IMR-90 (cell line): ENCODE measurements at regions of chr13 and their contacts with region 1.

Region 1: GRCh38 chr13:59677966-59678814 is 485.5 kb downstream of the DIAPH3 start:
- DNase-seq: peak; percentile 72
- ATAC-seq: peak; percentile 88
- H3K4me3 ChIP-seq: no peak overlapping the region
- H3K27ac ChIP-seq: no peak overlapping the region
- H3K4me1 ChIP-seq: peaks cover 3% of the 10 kb centered on the region
- H3K27me3 ChIP-seq: no peaks in the 10 kb centered on the region
- CTCF ChIP-seq: peak; percentile 88
- POLR2A ChIP-seq: no peak
- RAD21 ChIP-seq: peak; percentile 89

Region 2: DNA sequence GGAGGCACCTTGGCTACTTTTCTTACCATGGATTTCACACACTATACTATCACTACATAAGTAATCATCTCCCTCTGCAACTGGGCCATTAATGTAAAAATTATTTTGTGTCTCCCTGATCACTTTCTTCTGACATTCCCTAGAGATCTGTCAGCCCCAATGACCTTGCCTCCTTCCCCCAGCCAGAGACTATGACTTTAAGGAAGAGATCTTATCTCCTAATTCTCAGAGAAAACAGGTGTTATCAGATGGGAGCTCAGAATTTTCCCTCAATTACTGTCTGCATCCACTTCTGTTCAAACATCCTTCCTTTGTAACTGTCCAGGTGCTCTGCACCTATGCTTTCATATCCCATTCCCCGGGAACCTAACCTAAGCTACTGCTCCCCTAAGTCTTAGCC is 88.0 kb after region 1 on chr13:
- CTCF ChIA-PET with region 1: interaction called, 29 read pairs
- POLR2A ChIA-PET with region 1: no interaction called
- dilution Hi-C with region 1: no loop called
- in situ Hi-C with region 1: loop called (anchors 5 kb)
- intact Hi-C with region 1: loop called (anchors 1 kb)
- DNase-seq: no peak
- ATAC-seq: no peak
- H3K4me3 ChIP-seq: no peak overlapping the region
- H3K27ac ChIP-seq: no peak overlapping the region
- H3K4me1 ChIP-seq: no peaks in the 10 kb centered on the region
- H3K27me3 ChIP-seq: no peaks in the 10 kb centered on the region
- CTCF ChIP-seq: no peak
- POLR2A ChIP-seq: no peak
- RAD21 ChIP-seq: no peak

Region 3: GRCh38 chr13:59906413-59907049 is 228.3 kb after region 1 on chr13:
- CTCF ChIA-PET with region 1: interaction called, 3 read pairs
- POLR2A ChIA-PET with region 1: no interaction called
- dilution Hi-C with region 1: no loop called
- in situ Hi-C with region 1: no loop called
- intact Hi-C with region 1: loop called (anchors 1 kb)
- DNase-seq: peak; percentile 58
- ATAC-seq: peak; percentile 82
- H3K4me3 ChIP-seq: no peak overlapping the region
- H3K27ac ChIP-seq: no peak overlapping the region
- H3K4me1 ChIP-seq: no peaks in the 10 kb centered on the region
- H3K27me3 ChIP-seq: no peaks in the 10 kb centered on the region
- CTCF ChIP-seq: peak; percentile 80
- POLR2A ChIP-seq: no peak
- RAD21 ChIP-seq: peak; percentile 85

Region 4: GRCh38 chr13:60226507-60226906 is 548.3 kb after region 1 on chr13:
- CTCF ChIA-PET with region 1: no interaction called
- POLR2A ChIA-PET with region 1: no interaction called
- dilution Hi-C with region 1: no loop called
- in situ Hi-C with region 1: no loop called
- intact Hi-C with region 1: loop called (anchors 2 kb)
- DNase-seq: peak; percentile 47
- ATAC-seq: peak; percentile 72
- H3K4me3 ChIP-seq: no peak overlapping the region
- H3K27ac ChIP-seq: no peak overlapping the region
- H3K4me1 ChIP-seq: no peaks in the 10 kb centered on the region
- H3K27me3 ChIP-seq: peaks cover 8% of the 10 kb centered on the region
- CTCF ChIP-seq: peak; percentile 57
- POLR2A ChIP-seq: no peak
- RAD21 ChIP-seq: peak; percentile 68

Region 5: GRCh38 chr13:60335531-60335930 is 657.3 kb after region 1 on chr13:
- CTCF ChIA-PET with region 1: interaction called, 7 read pairs
- POLR2A ChIA-PET with region 1: no interaction called
- dilution Hi-C with region 1: no loop called
- in situ Hi-C with region 1: loop called (anchors 25 kb)
- intact Hi-C with region 1: loop called (anchors 2 kb)
- DNase-seq: peak; percentile 22
- ATAC-seq: peak; percentile 67
- H3K4me3 ChIP-seq: no peak overlapping the region
- H3K27ac ChIP-seq: no peak overlapping the region
- H3K4me1 ChIP-seq: no peaks in the 10 kb centered on the region
- H3K27me3 ChIP-seq: peaks cover 2% of the 10 kb centered on the region
- CTCF ChIP-seq: peak; percentile 69
- POLR2A ChIP-seq: no peak
- RAD21 ChIP-seq: peak; percentile 59